ENCODE measurements at regions of chr7 and their contacts with region 1.

Region 1: GRCh38 chr7:117458977-117459583 is 20.7 kb upstream of the CFTR start:
- DNase-seq: no peak
- ATAC-seq: no peak
- H3K4me3 ChIP-seq: no peak overlapping the region
- H3K27ac ChIP-seq: no peak overlapping the region
- H3K4me1 ChIP-seq: no peaks in the 10 kb centered on the region
- H3K27me3 ChIP-seq: no peaks in the 10 kb centered on the region

Region 2: DNA sequence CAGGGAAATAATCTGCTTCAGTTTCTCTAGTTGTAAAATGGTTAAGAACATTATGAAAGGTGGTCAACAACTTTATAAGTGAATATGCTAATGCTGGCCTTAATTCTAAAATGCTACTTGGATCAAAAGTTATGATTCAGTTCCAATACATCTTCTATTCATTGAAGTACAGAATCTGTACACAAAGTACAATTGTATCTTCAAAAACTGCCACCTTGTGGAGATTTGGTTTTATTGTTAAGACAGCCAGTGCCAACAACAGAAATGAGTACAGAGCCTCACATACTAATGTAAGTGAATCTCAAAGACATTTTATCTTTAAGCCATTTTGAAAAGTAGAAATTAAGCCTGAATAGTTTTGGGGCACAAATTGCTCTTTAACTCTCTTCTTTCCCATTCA is 214.8 kb after region 1 on chr7:
- intact Hi-C with region 1: loop called in 1 of 2 experiments (anchors 5 kb)
- DNase-seq: no peak
- ATAC-seq: no peak
- H3K4me3 ChIP-seq: no peak overlapping the region
- H3K27ac ChIP-seq: no peak overlapping the region
- H3K4me1 ChIP-seq: no peaks in the 10 kb centered on the region
- H3K27me3 ChIP-seq: no peaks in the 10 kb centered on the region